Mammary epithelial cell (primary cell): ENCODE measurements at regions of chr4 and their contacts with region 1.

Region 1: DNA sequence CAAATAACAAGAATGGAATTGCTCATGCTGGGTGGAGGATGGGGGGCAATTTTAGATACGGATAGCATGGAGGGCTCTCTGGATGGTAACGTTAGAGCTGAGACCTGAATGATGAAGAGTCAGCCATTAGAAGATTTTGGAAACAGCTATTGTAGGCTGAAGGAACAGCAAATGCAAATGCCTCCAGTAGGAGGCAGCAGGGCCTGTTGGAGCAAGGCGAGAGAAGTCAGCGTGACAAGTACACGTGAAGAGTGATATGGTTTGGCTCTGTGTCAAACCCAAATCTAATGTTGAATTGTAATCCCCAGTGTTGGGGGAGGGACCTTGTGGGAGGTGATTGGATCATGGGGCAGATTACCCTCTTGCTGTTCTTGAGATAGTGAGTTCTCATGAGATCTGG is 59.3 kb upstream of the SOD3 start:
- DNase-seq: peak; percentile 20
- H3K4me3 ChIP-seq: no peak overlapping the region
- H3K27ac ChIP-seq: no peak overlapping the region
- H3K4me1 ChIP-seq: no peaks in the 10 kb centered on the region
- H3K27me3 ChIP-seq: no peaks in the 10 kb centered on the region
- CTCF ChIP-seq: peak; percentile 54 to 71

Region 2: DNA sequence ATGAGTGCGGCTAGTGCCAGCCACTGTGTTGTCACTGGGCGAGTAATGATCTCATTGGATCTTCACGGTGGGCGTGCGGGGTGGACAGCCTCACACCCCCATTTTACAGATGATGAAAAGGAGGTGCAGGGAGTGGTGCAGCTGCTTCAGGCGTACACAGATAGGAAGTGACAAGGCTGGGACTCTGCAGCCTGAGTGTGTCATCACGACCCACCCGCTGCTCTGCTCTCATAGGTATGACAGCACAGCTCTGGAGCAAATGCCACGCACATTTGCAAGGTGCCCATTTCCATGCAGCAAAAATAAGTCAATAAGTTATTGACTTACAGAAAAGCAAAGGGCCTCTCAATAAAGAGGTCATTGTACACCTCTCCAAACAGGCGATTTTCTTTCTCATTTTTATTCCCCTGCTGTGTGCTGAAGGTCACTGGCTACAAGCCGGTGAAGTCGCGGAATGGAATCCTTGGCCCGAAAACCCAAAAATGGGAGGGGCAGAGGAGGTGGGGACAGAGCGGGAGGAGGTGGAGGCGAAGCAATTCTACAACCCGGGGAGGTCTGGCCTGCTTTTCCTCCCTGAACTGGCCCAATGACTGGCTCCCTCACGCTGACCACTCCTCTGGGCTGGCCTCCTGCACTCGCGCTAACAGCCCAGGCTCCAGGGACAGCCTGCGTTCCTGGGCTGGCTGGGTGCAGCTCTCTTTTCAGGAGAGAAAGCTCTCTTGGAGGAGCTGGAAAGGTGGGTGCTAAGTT is 59.0 kb after region 1 on chr4 and contains the start of gene SOD3:
- CTCF ChIA-PET with region 1: no interaction called
- dilution Hi-C with region 1: no loop called
- in situ Hi-C with region 1: no loop called
- intact Hi-C with region 1: loop called (anchors 1 kb)
- DNase-seq: no peak
- H3K4me3 ChIP-seq: no peak within 1 kb of the TSS
- H3K27ac ChIP-seq: no peak within 1 kb of the TSS
- H3K4me1 ChIP-seq: no peaks in the 10 kb centered on the region
- H3K27me3 ChIP-seq: peaks cover 8% of the 10 kb centered on the region
- CTCF ChIP-seq: no peak
- total RNA-seq, gene SOD3: 0.17 TPM in 1 of 2 donors, not detected in the other

Region 3: DNA sequence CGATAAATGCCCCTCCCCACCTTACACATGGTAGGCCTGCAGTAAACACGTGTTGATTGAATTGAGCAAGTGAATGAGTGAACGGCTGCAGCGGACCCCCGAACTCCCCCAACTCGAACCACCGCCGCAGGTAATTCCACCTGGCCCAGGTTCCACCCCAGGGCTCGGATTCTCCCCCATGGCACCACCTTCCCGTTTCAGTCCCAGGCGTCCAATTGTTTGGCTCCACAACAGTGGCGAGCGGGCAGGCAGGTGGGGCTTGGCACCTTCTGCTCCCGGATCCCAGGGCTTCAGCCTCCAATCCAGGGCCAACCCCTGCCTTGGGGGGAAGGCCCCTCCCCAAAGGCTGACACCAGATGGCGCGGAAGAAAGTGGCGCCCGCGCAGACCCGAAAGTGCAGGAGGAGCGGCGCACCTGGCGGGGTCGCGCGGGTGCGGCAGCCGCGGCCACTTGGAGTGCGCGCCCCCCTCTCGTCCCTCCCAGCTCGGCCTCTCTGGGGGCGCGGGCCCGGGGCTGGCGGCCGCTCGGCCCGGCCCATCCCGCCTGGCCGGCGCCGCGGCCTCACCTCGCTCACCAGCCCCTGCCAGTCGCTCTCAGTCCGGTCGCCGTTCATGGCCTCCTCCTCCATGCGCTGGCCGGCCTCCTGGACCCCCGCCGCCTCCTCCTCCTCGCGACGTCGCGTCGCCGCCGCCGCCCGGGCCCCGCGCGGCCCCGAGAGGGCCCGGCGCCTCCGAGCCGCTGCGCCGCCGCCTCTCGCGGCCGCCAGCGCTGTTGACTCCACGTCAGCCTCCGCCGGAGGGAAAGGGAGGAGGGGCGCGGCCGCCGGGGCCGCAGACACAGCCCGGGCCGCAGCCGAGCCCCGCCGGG is 176.4 kb after region 1 on chr4 and contains the start of gene CCDC149:
- CTCF ChIA-PET with region 1: interaction called, 4 read pairs
- dilution Hi-C with region 1: no loop called
- in situ Hi-C with region 1: no loop called
- intact Hi-C with region 1: loop called (anchors 5 kb)
- DNase-seq: peak; percentile 61
- H3K4me3 ChIP-seq: peak within 1 kb of the TSS; percentile 47 to 56 (median 52)
- H3K27ac ChIP-seq: no peak within 1 kb of the TSS
- H3K4me1 ChIP-seq: peaks cover 4% of the 10 kb centered on the region
- H3K27me3 ChIP-seq: no peaks in the 10 kb centered on the region
- CTCF ChIP-seq: peak in 1 of 2 donors; percentile 8
- total RNA-seq, gene CCDC149: 4.8 to 7.7 TPM

Region 4: GRCh38 chr4:24988776-24989175 is 252.7 kb after region 1 on chr4:
- CTCF ChIA-PET with region 1: no interaction called
- dilution Hi-C with region 1: no loop called
- in situ Hi-C with region 1: no loop called
- intact Hi-C with region 1: loop called (anchors 2 kb)
- DNase-seq: peak; percentile 26
- H3K4me3 ChIP-seq: no peak overlapping the region
- H3K27ac ChIP-seq: no peak overlapping the region
- H3K4me1 ChIP-seq: no peaks in the 10 kb centered on the region
- H3K27me3 ChIP-seq: no peaks in the 10 kb centered on the region
- CTCF ChIP-seq: peak; percentile 45 to 68

Region 5: DNA sequence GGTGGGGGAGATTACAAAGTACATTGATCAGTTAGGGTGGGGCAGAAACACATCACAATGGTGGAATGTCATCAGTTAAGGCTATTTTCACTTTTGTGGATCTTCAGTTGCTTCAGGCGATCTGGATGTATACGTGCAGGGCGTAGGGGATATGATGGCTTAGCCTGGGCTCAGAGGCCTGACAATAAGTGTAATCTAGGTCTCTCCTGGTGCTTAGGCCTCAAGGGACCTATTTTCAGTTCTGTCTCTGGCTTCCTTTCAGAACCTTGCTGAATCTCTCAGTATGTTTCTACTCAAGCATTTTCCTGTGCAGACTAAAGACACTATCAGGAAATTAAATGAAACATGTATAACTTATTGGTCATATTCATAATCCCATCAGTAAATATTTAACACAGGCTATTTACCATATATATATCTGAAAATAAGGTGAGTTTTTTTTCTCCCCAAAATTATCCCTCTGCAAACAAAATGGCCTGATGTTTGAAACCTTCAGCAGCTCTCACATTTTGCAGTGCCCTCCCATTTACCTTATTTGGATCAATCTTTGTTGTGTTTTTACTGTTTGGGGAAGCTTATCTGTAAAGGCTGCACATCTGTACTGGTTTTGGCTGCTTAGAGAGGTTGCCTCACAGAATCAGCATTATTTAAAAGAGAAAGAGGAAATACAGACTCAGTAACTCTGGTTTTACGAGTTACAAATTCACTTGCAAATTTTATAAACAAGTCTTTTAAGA is 574.2 kb after region 1 on chr4:
- CTCF ChIA-PET with region 1: no interaction called
- dilution Hi-C with region 1: no loop called
- in situ Hi-C with region 1: no loop called
- intact Hi-C with region 1: no loop called
- DNase-seq: no peak
- H3K4me3 ChIP-seq: no peak overlapping the region
- H3K27ac ChIP-seq: no peak overlapping the region
- H3K4me1 ChIP-seq: peaks cover 7% of the 10 kb centered on the region
- H3K27me3 ChIP-seq: peaks cover 2% of the 10 kb centered on the region
- CTCF ChIP-seq: no peak